K562 (cell line): ENCODE measurements at regions of chr3 and their contacts with region 1.

Region 1: DNA sequence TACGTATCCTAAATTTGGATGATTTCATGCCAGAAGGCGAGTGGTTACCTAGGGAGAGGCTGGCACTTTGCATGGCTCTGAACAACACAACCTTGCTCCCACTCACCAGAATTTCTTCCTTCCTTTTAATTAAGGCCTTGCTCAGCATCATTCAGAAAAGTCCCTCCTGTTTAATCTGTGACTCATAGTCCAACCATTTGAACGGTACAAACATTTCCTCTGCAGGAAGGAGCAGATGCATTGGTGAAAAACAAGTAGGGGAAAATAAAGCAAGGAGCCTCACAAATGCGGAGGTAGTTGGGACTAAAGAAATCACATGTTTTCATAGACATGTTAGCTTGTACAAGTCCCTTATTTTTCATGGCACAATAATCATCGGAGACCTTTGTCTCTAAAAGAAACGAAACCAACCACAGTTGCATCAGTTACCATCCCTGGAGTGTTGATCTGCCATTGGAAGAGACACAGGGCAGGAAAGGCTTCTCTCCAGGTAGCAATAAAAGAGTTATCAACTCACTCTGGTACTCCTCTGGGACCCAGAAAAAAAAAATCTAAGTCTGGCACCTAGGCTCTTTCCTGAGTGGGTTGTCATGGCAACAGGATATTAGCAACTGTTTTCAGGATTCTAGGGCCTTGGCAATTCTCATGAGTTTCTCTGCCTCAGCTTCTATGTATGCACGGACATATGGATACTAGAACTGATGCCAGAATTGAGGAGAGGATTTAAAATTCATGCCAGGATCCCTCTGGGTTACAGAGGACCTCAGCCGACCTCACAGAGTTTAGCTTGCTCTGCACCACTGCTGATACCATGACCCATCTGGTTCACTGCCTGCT is 255.4 kb upstream of the ARPP21 start:
- DNase-seq: no peak
- ATAC-seq: no peak
- H3K4me3 ChIP-seq: no peak overlapping the region
- H3K27ac ChIP-seq: no peak overlapping the region
- H3K4me1 ChIP-seq: no peaks in the 10 kb centered on the region
- H3K27me3 ChIP-seq: no peaks in the 10 kb centered on the region
- CTCF ChIP-seq: no peak
- EP300 ChIP-seq: no peak
- POLR2A ChIP-seq: no peak
- RAD21 ChIP-seq: no peak

Region 2: GRCh38 chr3:35422836-35423601 is 39.1 kb after region 1 on chr3:
- CTCF ChIA-PET with region 1: no interaction called
- POLR2A ChIA-PET with region 1: no interaction called
- in situ Hi-C with region 1: no loop called
- intact Hi-C with region 1: loop called (anchors 1 kb)
- DNase-seq: no peak
- ATAC-seq: no peak
- H3K4me3 ChIP-seq: no peak overlapping the region
- H3K27ac ChIP-seq: no peak overlapping the region
- H3K4me1 ChIP-seq: no peaks in the 10 kb centered on the region
- H3K27me3 ChIP-seq: no peaks in the 10 kb centered on the region
- CTCF ChIP-seq: no peak
- EP300 ChIP-seq: no peak
- POLR2A ChIP-seq: no peak
- RAD21 ChIP-seq: no peak

Region 3: DNA sequence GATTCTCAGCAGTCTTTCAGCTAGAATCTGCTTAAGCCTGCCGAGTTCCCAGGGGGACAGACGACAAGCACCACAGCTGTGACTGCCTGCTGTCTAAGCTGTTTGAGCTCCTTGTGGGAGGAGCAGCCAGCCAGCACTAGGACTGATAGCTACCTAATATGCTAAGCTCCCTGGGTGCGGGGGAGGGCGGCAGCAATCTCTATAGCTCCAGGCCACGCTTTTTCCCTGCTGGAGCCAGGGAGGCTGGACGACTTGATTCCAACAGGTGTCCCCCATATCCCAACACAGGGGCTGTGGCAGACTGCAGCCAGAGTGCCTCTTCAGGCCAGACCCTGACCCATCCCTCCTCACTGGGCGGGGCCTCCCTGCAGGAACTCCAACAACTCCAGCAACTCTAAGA is 121.2 kb after region 1 on chr3:
- CTCF ChIA-PET with region 1: no interaction called
- POLR2A ChIA-PET with region 1: no interaction called
- in situ Hi-C with region 1: no loop called
- intact Hi-C with region 1: no loop called
- DNase-seq: no peak
- ATAC-seq: no peak
- H3K4me3 ChIP-seq: no peak overlapping the region
- H3K27ac ChIP-seq: no peak overlapping the region
- H3K4me1 ChIP-seq: no peaks in the 10 kb centered on the region
- H3K27me3 ChIP-seq: no peaks in the 10 kb centered on the region
- CTCF ChIP-seq: no peak
- EP300 ChIP-seq: no peak
- POLR2A ChIP-seq: no peak
- RAD21 ChIP-seq: no peak